ENCODE measurements at regions of chr14 and their contacts with region 1.

Region 1: GRCh38 chr14:68593806-68594561 is 198.9 kb downstream of the ZFP36L1 start:
- DNase-seq: no peak

Region 2: GRCh38 chr14:68520637-68521556 is 73.1 kb before region 1 on chr14:
- intact Hi-C with region 1: no loop called
- DNase-seq: no peak

Region 3: DNA sequence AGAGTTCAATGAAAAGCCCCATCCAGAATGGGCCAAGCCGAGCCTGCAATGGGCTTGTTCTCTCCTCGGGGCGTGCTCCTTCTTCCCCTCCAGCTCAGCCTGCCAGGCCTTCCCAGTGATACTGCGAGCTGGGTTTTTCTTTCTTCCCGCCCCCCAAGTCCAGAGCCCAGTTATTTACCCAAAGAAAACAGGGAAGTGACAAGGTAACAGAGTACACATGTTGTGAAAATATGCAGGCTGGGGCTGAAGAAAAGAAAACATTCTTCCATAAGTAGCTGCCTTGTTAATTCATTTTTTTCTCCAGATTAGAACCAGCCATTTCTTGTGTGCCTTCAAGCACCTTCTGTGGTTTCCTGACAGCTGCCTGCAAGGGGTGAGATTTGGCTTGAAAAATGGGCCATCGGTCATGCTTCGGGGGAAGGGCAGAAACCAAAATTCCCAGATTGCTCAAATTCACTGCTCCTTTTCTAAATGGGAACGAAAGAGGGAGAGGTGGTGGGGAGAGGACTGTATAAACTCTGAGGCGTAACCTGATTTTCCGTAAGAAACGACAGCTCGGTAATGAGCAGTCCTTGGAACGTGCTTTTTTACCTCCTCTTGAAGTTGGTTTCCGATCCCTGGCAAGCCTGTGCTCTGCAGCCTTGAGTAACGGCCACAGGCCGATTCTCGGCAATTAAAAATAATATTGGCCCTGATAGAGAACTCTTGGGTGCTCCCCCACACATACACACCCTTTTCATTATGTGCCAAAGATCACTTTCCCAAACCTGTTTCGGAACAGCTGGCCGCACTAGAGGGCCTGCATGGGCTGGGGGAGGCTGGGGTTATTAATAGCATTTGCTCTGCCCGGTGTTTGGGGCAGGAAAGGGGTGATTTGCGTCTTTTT is 30.5 kb before region 1 on chr14:
- intact Hi-C with region 1: loop called in 1 of 2 experiments (anchors 1 kb)
- DNase-seq: no peak

Region 4: GRCh38 chr14:68633071-68633991 is 39.3 kb after region 1 on chr14:
- intact Hi-C with region 1: loop called in 1 of 2 experiments (anchors 5 kb)
- DNase-seq: peak; percentile 55

Region 5: DNA sequence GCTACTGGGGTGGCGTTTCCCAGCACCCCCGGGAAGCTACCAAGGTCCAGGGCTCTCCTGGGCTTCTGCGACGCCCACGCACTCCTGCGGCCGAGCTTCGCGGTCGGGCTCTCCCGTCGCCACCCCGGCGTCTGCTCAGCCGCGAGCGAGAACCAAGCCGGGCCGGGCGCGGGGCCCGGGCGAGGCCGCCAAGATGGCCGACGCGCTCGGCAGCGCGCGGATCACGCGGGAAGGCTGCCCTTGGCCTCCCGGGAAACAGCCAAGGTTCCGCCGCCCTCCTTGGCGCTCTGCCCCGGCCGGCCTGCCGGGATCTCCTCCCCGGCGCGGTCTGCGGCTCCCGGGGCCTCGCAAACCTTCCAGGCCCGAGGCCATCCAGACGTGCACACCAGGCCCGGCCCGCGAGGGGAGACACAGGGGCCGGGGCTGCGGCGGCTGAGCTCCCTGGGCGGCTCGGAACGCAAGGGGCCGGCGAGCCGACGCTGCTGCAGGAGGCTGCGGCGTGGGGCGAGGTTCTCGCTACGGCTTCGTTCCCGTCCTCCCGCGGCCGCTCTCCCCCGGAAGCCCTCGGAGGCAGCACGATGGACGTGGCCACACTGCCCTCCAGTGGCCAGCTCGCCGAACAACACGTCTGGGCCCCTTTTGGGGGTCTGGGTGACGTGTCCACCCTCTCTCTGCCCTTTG is 222.4 kb after region 1 on chr14:
- intact Hi-C with region 1: no loop called
- DNase-seq: peak; percentile 97

Measured in posterior vena cava (tissue), 2 donors.